H1 (cell line): ENCODE measurements at regions of chr6 and their contacts with region 1.

Region 1: GRCh38 chr6:125693480-125693879 is 56.0 kb upstream of the HEY2 start:
- DNase-seq: no peak
- H3K4me3 ChIP-seq: peak overlapping the region in 1 of 4 experiments; percentile 19; a peak in 1 of 8 replicates
- H3K27ac ChIP-seq: no peak overlapping the region
- H3K4me1 ChIP-seq: no peaks in the 10 kb centered on the region
- H3K27me3 ChIP-seq: no peaks in the 10 kb centered on the region
- CTCF ChIP-seq: no peak
- EP300 ChIP-seq: no peak
- POLR2A ChIP-seq: peak in 1 of 2 experiments; percentile 74; a peak in 1 of 3 replicates
- RAD21 ChIP-seq: no peak

Region 2: GRCh38 chr6:125746731-125747594 is 53.5 kb after region 1 on chr6:
- CTCF ChIA-PET with region 1: no interaction called
- POLR2A ChIA-PET with region 1: interaction called, 12 read pairs
- DNase-seq: peak; percentile 64 to 72
- H3K4me3 ChIP-seq: peak overlapping the region; percentile 72 to 77 (median 76)
- H3K27ac ChIP-seq: no peak overlapping the region
- H3K4me1 ChIP-seq: peaks cover 2 to 15% (median 7%) of the 10 kb centered on the region in 4 experiments; a peak in 5 of 7 replicates
- H3K27me3 ChIP-seq: peaks cover 0 to 25% (median 16%) of the 10 kb centered on the region in 4 experiments; a peak in 6 of 7 replicates
- CTCF ChIP-seq: no peak
- EP300 ChIP-seq: peak in 1 of 2 experiments; percentile 70; a peak in 1 of 3 replicates
- POLR2A ChIP-seq: no peak; a peak in 2 of 3 replicates
- RAD21 ChIP-seq: 0 out of 4 replicates have a peak, but pooled peaks of 1 of the 2 experiments have one; percentile 15